Astrocyte of the cerebellum (primary cell): ENCODE measurements at regions of chrX and their contacts with region 1.

Region 1: GRCh38 chrX:140608111-140608510 is 101.4 kb upstream of the LINC00632 start:
- DNase-seq: no peak
- H3K4me3 ChIP-seq: no peak overlapping the region
- CTCF ChIP-seq: no peak

Region 2: GRCh38 chrX:140563893-140564292 is 44.2 kb before region 1 on chrX:
- in situ Hi-C with region 1: no loop called
- DNase-seq: no peak
- H3K4me3 ChIP-seq: no peak overlapping the region
- CTCF ChIP-seq: no peak

Region 3: DNA sequence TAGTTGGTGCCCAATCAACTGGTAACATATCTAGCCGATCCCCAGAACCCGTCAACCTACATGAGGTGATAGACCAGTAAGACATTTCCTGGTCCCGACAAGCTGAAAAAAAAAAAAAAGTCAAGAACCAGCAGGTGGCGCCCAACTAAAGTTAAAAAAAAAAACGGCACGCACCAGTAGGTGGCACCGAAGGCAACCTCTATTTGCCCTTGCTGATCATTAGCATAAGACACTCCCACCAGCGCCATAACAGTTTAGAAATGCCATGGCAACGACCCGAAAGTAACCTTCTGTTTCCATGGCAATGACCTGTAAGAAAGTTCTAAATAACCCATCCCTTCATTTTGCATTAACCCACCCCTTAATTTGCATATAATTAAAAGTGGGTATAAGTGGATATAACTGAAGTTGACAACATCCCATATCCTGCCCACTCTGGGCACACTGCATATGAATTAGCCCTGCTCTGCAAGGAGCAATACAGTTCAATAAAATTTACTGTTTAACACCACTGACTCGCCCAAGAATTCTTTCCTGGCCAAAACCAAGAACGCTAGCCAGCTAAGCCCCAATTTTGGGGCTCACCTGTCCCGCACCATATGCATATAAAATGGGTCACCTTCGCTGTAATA is 310.4 kb after region 1 on chrX:
- in situ Hi-C with region 1: loop called (anchors 10 kb)
- DNase-seq: peak; percentile 22
- H3K4me3 ChIP-seq: no peak overlapping the region
- CTCF ChIP-seq: peak; percentile 57